ENCODE measurements at regions of chr21 and their contacts with region 1.

Region 1: GRCh38 chr21:16534408-16535101 is 804.8 kb downstream of the USP25 start:
- DNase-seq: peak; percentile 85
- H3K4me3 ChIP-seq: peak overlapping the region; percentile 21 to 42 (median 39)
- H3K27ac ChIP-seq: peak overlapping the region; percentile 75 to 79 (median 78)
- H3K4me1 ChIP-seq: peaks cover 0 to 14% (median 9%) of the 10 kb centered on the region in 4 donors
- H3K27me3 ChIP-seq: no peaks in the 10 kb centered on the region
- CTCF ChIP-seq: no peak
- EP300 ChIP-seq: peak in 1 of 4 donors; percentile 16
- POLR2A ChIP-seq: no peak

Region 2: DNA sequence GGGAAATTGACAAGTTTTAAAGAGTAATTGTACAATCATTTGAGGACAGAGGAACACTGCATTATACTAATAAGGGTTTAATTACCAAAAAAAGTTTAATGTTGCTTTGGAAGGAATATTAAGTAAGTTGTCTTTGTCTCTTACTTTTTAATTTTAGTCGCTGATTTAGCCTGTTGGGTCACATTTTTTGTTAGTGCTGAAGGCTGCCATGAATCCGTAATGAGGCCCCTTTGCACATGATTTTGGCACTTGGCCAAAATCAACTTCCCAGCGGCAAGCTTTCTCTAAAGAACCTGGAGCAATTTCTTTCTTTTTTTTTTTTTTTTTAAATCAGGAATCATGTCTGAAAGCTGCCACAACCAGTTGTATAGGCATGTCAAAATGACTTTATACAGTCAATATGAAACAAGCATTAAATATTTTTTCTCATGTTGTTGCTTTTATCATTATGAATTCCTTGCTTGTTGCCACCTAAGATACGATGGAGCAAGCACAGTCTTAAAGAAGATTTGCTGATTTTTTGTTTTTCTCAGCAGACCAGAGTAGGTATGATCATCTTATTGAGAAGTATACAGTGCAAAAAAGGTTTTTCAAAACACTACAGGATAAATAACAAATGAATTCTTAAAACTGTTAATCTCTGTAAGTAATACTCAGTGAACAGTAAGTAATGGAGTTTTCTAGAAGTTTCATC is 114.4 kb before region 1 on chr21:
- intact Hi-C with region 1: loop called (anchors 10 kb)
- DNase-seq: peak; percentile 71
- H3K4me3 ChIP-seq: peak overlapping the region; percentile 8 to 45 (median 38)
- H3K27ac ChIP-seq: peak overlapping the region; percentile 58 to 76 (median 68)
- H3K4me1 ChIP-seq: peaks cover 0 to 31% (median 24%) of the 10 kb centered on the region in 4 donors
- H3K27me3 ChIP-seq: no peaks in the 10 kb centered on the region
- CTCF ChIP-seq: no peak
- EP300 ChIP-seq: no peak
- POLR2A ChIP-seq: no peak

Region 3: DNA sequence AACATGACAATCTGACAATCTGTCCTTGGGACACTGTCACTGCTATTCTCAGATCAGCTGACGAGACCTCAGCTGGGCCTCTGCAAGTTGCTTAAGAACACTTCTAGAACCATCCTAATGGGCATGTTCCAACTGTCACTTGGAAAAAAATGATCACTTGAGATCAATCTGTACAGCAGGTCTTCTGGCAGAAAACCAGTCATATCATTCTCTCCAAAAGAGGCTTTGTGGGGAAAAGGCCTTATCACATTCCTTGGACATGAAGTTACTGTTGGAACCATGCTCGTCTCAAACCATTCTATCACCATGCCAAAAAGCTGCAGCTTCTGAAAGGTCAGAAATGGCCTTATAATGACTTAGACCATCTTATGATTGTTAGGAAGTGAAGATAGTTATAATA is 60.6 kb before region 1 on chr21:
- intact Hi-C with region 1: no loop called
- DNase-seq: no peak
- H3K4me3 ChIP-seq: no peak overlapping the region
- H3K27ac ChIP-seq: peak overlapping the region in 2 of 4 donors; percentile 9 to 40
- H3K4me1 ChIP-seq: peaks cover 0 to 12% (median 8%) of the 10 kb centered on the region in 4 donors
- H3K27me3 ChIP-seq: no peaks in the 10 kb centered on the region
- CTCF ChIP-seq: no peak
- EP300 ChIP-seq: no peak
- POLR2A ChIP-seq: no peak

Region 4: DNA sequence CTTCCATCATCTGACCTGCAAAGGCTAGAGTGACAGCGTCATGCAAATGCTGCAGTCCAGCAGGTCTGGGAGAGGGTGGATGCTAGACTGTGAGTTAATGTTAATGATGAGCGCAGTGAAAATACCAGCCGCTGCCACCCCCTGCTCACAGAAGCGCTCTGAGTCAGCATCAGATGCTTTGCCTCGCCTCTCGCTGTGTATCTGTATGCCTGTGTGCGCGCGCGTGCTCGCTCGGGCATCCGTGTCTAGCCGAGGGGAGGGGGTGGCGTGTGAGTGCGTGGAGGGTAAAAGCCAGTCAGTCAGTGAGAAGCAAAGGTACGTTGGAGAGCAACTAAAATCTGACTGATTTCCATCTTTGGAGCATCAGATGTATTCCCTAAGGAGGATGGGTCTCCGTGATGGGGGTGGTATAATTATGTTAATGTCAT is 53.9 kb after region 1 on chr21:
- intact Hi-C with region 1: loop called (anchors 10 kb)
- DNase-seq: peak; percentile 85
- H3K4me3 ChIP-seq: peak overlapping the region; percentile 21 to 49 (median 48)
- H3K27ac ChIP-seq: peak overlapping the region; percentile 63 to 79 (median 70)
- H3K4me1 ChIP-seq: peaks cover 0 to 25% (median 14%) of the 10 kb centered on the region in 4 donors
- H3K27me3 ChIP-seq: no peaks in the 10 kb centered on the region
- CTCF ChIP-seq: no peak
- EP300 ChIP-seq: no peak
- POLR2A ChIP-seq: peak in 1 of 2 donors; percentile 24

Region 5: DNA sequence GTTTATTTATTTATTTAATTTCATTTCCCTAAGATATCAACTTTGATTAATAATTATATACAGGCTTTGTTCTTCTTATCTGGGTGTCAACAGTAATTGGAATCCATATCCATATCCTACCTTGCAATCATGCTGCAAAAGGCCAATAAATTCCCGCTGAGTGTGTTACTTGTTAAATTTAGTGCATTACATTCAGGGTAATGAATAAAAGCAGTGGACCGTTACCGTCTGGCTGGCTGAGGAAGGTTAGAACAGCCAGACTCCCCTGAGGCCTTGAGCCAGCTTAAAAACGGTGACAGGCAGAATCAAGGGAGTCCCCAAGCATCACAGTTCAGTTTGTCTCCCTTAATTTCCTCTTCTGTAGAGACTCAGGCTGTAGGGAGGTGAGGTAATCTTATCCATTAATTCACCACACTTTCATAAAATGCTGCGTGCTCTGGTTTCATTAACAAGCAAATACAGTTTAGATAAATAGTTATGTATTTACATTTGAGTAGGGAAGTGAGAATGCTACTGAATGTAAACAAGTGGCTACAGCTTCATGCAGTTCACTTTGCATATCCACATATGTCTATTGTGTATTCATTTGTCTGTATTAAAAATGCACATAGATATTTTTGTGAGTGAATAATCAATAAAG is 90.0 kb after region 1 on chr21:
- intact Hi-C with region 1: no loop called
- DNase-seq: no peak
- H3K4me3 ChIP-seq: no peak overlapping the region
- H3K27ac ChIP-seq: no peak overlapping the region
- H3K4me1 ChIP-seq: peaks cover 0 to 7% (median 0%) of the 10 kb centered on the region in 4 donors
- H3K27me3 ChIP-seq: no peaks in the 10 kb centered on the region
- CTCF ChIP-seq: no peak
- EP300 ChIP-seq: no peak
- POLR2A ChIP-seq: no peak